Psoas muscle (tissue), 8 donors: ENCODE measurements at regions of chr17 and their contacts with region 1.

Region 1: GRCh38 chr17:41976142-41976768 is 9.7 kb downstream of the CNP start:
- DNase-seq: peak in 1 of 2 donors; percentile 46
- ATAC-seq: no peak
- H3K4me3 ChIP-seq: no peak overlapping the region
- H3K27ac ChIP-seq: no peak overlapping the region
- H3K4me1 ChIP-seq: peaks cover 22% of the 10 kb centered on the region
- H3K27me3 ChIP-seq: no peaks in the 10 kb centered on the region
- CTCF ChIP-seq: no peak

Region 2: DNA sequence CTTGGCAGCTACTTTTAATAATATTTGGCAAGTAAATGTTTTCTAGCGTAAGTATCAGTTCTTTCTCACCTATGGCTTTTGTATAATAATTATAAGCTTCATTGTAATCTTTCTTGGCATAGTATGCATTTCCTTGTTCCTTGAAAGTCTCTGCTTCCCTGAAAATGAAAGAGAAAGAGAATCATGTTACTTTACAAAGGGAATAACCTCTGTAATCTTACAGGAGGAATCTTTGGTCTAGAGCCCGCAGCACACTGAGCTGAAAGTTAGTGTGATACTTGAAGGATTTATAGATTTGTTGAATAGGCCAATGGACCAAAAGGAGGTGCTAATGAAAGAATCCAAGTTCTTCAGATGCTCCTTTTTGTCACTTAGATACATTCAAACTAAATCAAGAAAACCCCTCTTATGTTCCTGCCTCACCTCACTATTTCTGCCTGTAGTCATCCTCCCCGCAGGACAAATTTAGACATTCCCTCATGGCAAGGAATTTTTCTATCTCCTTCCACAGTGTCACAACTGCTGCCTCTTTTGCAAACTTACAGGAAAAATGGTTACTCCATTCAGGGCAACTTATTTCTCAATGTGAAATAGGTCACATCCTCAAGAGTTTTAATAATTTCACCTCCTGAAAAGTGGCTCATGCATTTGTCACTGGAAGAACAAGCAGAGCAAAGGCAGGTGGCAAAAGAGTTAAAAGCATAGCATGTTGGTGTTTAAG is 24.3 kb after region 1 on chr17:
- intact Hi-C with region 1: no loop called
- DNase-seq: no peak
- ATAC-seq: peak; percentile 42 to 66 (median 56)
- H3K4me3 ChIP-seq: no peak overlapping the region
- H3K27ac ChIP-seq: peak overlapping the region; percentile 14
- H3K4me1 ChIP-seq: peaks cover 43% of the 10 kb centered on the region
- H3K27me3 ChIP-seq: no peaks in the 10 kb centered on the region
- CTCF ChIP-seq: no peak

Region 3: GRCh38 chr17:42010898-42011516 is 34.8 kb after region 1 on chr17:
- intact Hi-C with region 1: loop called in 1 of 2 experiments (anchors 5 kb)
- DNase-seq: no peak
- ATAC-seq: no peak
- H3K4me3 ChIP-seq: no peak overlapping the region
- H3K27ac ChIP-seq: no peak overlapping the region
- H3K4me1 ChIP-seq: peaks cover 69% of the 10 kb centered on the region
- H3K27me3 ChIP-seq: no peaks in the 10 kb centered on the region
- CTCF ChIP-seq: no peak

Region 4: DNA sequence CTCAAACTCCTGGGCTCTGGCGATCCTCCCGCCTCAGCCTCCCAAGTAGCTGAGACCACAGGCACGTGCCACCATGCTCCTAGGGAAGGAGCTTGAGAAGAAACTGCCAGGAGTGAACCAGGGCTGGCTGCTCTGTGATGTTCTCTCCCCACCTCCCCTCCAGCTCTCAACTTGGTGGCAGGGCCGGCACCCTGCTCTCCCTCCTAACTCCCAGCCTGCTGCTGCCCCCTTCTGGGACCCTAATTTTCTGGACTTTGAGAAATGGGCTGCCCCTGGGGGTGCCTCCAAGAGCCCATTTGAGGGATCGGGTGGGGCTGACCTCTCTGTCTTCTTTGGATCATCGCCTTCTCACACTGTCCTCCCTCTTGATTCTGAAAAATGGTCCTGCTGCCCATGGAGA is 426.9 kb after region 1 on chr17:
- intact Hi-C with region 1: no loop called
- DNase-seq: no peak
- ATAC-seq: no peak
- H3K4me3 ChIP-seq: no peak overlapping the region
- H3K27ac ChIP-seq: no peak overlapping the region
- H3K4me1 ChIP-seq: peaks cover 35% of the 10 kb centered on the region
- H3K27me3 ChIP-seq: no peaks in the 10 kb centered on the region
- CTCF ChIP-seq: no peak